Endothelial cell of umbilical vein (primary cell): ENCODE measurements at regions of chr21 and their contacts with region 1.

Region 1: GRCh38 chr21:32612075-32612998 is at the start of gene CFAP298:
- DNase-seq: peak; percentile 92
- H3K4me3 ChIP-seq: peak within 1 kb of the TSS; percentile 74 to 99 (median 95)
- H3K27ac ChIP-seq: peak within 1 kb of the TSS; percentile 79
- H3K4me1 ChIP-seq: peaks cover 10% of the 10 kb centered on the region
- H3K27me3 ChIP-seq: no peaks in the 10 kb centered on the region
- CTCF ChIP-seq: no peak
- POLR2A ChIP-seq: peak; percentile 91
- total RNA-seq, gene CFAP298: 36.0 and 44.1 TPM in 2 replicates

Region 2: GRCh38 chr21:32483293-32483595 is 129.1 kb before region 1 on chr21:
- CTCF ChIA-PET with region 1: no interaction called
- POLR2A ChIA-PET with region 1: interaction called, 11 read pairs
- dilution Hi-C with region 1: no loop called
- intact Hi-C with region 1: no loop called
- DNase-seq: no peak
- H3K4me3 ChIP-seq: no peak overlapping the region
- H3K27ac ChIP-seq: no peak overlapping the region
- H3K4me1 ChIP-seq: peaks cover 16% of the 10 kb centered on the region
- H3K27me3 ChIP-seq: no peaks in the 10 kb centered on the region
- CTCF ChIP-seq: no peak
- POLR2A ChIP-seq: no peak

Region 3: GRCh38 chr21:32626621-32627196 is 14.4 kb after region 1 on chr21:
- CTCF ChIA-PET with region 1: no interaction called
- POLR2A ChIA-PET with region 1: no interaction called
- dilution Hi-C with region 1: no loop called
- intact Hi-C with region 1: no loop called
- DNase-seq: no peak
- H3K4me3 ChIP-seq: no peak overlapping the region
- H3K27ac ChIP-seq: no peak overlapping the region
- H3K4me1 ChIP-seq: no peaks in the 10 kb centered on the region
- H3K27me3 ChIP-seq: no peaks in the 10 kb centered on the region
- CTCF ChIP-seq: no peak
- POLR2A ChIP-seq: no peak